Spleen (tissue), 13 donors: ENCODE measurements at regions of chr14 and their contacts with region 1.

Region 1: GRCh38 chr14:100610511-100611217 is 23.4 kb upstream of the BEGAIN start:
- DNase-seq: no peak
- H3K4me3 ChIP-seq: no peak overlapping the region
- H3K27ac ChIP-seq: no peak overlapping the region
- H3K4me1 ChIP-seq: no peaks in the 10 kb centered on the region
- H3K27me3 ChIP-seq: peaks cover 0 to 23% (median 0%) of the 10 kb centered on the region in 7 donors
- CTCF ChIP-seq: no peak
- POLR2A ChIP-seq: no peak

Region 2: GRCh38 chr14:100577321-100577985 is 33.2 kb before region 1 on chr14:
- intact Hi-C with region 1: loop called (anchors 2 kb)
- DNase-seq: peak; percentile 75
- H3K4me3 ChIP-seq: no peak overlapping the region
- H3K27ac ChIP-seq: no peak overlapping the region
- H3K4me1 ChIP-seq: peaks cover 0 to 49% (median 17%) of the 10 kb centered on the region in 6 donors
- H3K27me3 ChIP-seq: peaks cover 0 to 13% (median 0%) of the 10 kb centered on the region in 7 donors
- CTCF ChIP-seq: no peak
- POLR2A ChIP-seq: no peak